Heart left ventricle (tissue), 16 donors: ENCODE measurements at regions of chr4 and their contacts with region 1.

Region 1: GRCh38 chr4:114386637-114387233 is 211.9 kb upstream of the UGT8 start:
- DNase-seq: no peak
- ATAC-seq: no peak
- H3K4me3 ChIP-seq: no peak overlapping the region
- H3K27ac ChIP-seq: no peak overlapping the region
- H3K4me1 ChIP-seq: no peaks in the 10 kb centered on the region
- H3K27me3 ChIP-seq: peaks cover 0 to 9% (median 0%) of the 10 kb centered on the region in 9 donors
- CTCF ChIP-seq: peak; percentile 37 to 75 (median 61)
- POLR2A ChIP-seq: no peak

Region 2: GRCh38 chr4:113773014-113773413 is 613.7 kb before region 1 on chr4:
- intact Hi-C with region 1: loop called in 2 of 10 experiments (anchors 10 kb)
- DNase-seq: no peak
- ATAC-seq: no peak
- H3K4me3 ChIP-seq: no peak overlapping the region
- H3K27ac ChIP-seq: no peak overlapping the region
- H3K4me1 ChIP-seq: no peaks in the 10 kb centered on the region
- H3K27me3 ChIP-seq: no peaks in the 10 kb centered on the region
- CTCF ChIP-seq: no peak
- POLR2A ChIP-seq: no peak

Region 3: DNA sequence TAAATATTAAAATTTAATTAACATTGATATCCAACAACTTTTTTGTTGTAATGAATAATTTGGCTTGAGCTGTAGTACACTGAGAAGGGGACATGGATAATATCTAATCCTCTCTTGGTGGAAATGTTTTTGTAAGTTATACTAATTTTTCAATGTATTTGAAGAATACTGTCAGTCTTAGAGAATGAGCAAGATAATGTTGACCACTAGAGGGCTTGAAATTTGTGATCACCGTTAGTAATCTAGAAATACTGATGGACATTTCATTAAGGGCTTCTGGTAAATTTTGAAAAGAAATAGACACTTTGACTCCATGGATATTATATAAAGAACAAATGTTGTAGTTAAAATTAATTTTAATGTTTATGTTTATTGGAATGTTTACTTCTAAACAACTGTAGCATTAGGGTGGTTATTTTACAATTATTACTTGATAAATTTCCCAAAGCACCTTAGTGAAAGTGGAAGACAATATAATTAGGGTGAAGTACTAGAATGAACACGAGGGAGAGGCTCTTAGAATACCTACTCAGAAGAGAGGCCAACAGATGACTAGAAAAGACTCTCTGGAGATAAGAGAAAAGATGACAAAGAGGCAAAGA is 605.2 kb before region 1 on chr4:
- intact Hi-C with region 1: loop called in 2 of 10 experiments (anchors 10 kb)
- DNase-seq: no peak
- ATAC-seq: peak in 1 of 4 donors; percentile 32
- H3K4me3 ChIP-seq: no peak overlapping the region
- H3K27ac ChIP-seq: no peak overlapping the region
- H3K4me1 ChIP-seq: peaks cover 0 to 28% (median 0%) of the 10 kb centered on the region in 12 donors
- H3K27me3 ChIP-seq: no peaks in the 10 kb centered on the region
- CTCF ChIP-seq: peak; percentile 55 to 78 (median 71)
- POLR2A ChIP-seq: no peak

Region 4: GRCh38 chr4:113790478-113790877 is 596.3 kb before region 1 on chr4:
- intact Hi-C with region 1: loop called in 2 of 10 experiments (anchors 10 kb)
- DNase-seq: no peak
- ATAC-seq: peak in 1 of 4 donors; percentile 26
- H3K4me3 ChIP-seq: no peak overlapping the region
- H3K27ac ChIP-seq: peak overlapping the region in 1 of 12 donors; percentile 81
- H3K4me1 ChIP-seq: peaks cover 0 to 49% (median 0%) of the 10 kb centered on the region in 12 donors
- H3K27me3 ChIP-seq: no peaks in the 10 kb centered on the region
- CTCF ChIP-seq: no peak
- POLR2A ChIP-seq: no peak

Region 5: GRCh38 chr4:113952452-113953029 is 434.2 kb before region 1 on chr4:
- intact Hi-C with region 1: loop called in 3 of 10 experiments (anchors 5 to 10 kb)
- DNase-seq: no peak
- ATAC-seq: peak in 3 of 4 donors; percentile 61 to 80 (median 70)
- H3K4me3 ChIP-seq: no peak overlapping the region
- H3K27ac ChIP-seq: no peak overlapping the region
- H3K4me1 ChIP-seq: peaks cover 0 to 18% (median 7%) of the 10 kb centered on the region in 12 donors
- H3K27me3 ChIP-seq: no peaks in the 10 kb centered on the region
- CTCF ChIP-seq: peak; percentile 45 to 68 (median 54)
- POLR2A ChIP-seq: no peak

Region 6: GRCh38 chr4:114659386-114660008 is 272.8 kb after region 1 on chr4:
- intact Hi-C with region 1: loop called (anchors 2 to 10 kb)
- DNase-seq: peak in 4 of 5 donors; percentile 7 to 33 (median 29)
- ATAC-seq: peak in 3 of 4 donors; percentile 72 to 86 (median 84)
- H3K4me3 ChIP-seq: no peak overlapping the region
- H3K27ac ChIP-seq: no peak overlapping the region
- H3K4me1 ChIP-seq: no peaks in the 10 kb centered on the region
- H3K27me3 ChIP-seq: peaks cover 0 to 6% (median 0%) of the 10 kb centered on the region in 9 donors
- CTCF ChIP-seq: peak; percentile 55 to 76 (median 64)
- POLR2A ChIP-seq: no peak

Region 7: DNA sequence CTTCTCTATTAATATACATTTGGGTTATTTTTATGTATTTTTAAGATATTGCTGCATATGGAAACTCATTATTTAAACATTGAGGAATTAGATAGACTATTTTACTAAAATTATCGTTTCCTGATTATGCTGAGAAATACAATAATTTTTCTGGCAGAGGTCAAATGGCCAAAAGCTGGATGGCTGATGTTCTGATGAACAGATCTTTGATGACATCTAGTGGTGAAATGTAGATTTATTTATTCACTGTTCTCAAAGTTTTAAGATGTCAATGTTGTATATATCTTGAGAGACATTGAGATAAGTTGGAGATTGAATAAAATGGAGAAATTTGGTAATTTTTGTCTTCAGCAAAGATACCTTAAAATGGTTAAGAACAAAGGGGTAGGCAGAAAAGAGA is 308.0 kb after region 1 on chr4:
- intact Hi-C with region 1: loop called in 9 of 10 experiments (anchors 2 to 10 kb)
- DNase-seq: no peak
- ATAC-seq: no peak
- H3K4me3 ChIP-seq: no peak overlapping the region
- H3K27ac ChIP-seq: no peak overlapping the region
- H3K4me1 ChIP-seq: no peaks in the 10 kb centered on the region
- H3K27me3 ChIP-seq: peaks cover 0 to 6% (median 0%) of the 10 kb centered on the region in 9 donors
- CTCF ChIP-seq: peak; percentile 34 to 69 (median 52)
- POLR2A ChIP-seq: no peak

Region 8: DNA sequence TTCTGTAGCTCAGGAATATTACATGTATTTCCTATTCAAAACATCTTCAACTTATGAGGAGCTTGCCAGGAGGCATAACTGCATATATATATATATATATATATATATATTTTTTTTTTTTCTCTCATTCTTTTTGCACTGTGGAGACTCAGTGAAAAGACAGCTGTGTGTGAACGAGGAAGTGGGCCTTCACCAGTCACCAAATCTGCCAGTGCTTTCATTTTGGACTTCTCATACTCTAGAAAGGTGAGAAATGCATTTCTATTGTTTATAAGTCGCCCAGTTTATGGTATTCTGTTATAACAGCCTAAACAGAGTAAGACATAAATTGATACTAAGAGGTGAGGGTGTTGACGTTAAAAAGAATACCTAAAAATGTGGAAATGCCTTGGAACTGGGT is 1988.1 kb after region 1 on chr4:
- intact Hi-C with region 1: no loop called
- DNase-seq: no peak
- ATAC-seq: no peak
- H3K4me3 ChIP-seq: no peak overlapping the region
- H3K27ac ChIP-seq: no peak overlapping the region
- H3K4me1 ChIP-seq: no peaks in the 10 kb centered on the region
- H3K27me3 ChIP-seq: no peaks in the 10 kb centered on the region
- CTCF ChIP-seq: no peak
- POLR2A ChIP-seq: no peak